H1 (cell line): ENCODE measurements at regions of chr12 and their contacts with region 1.

Region 1: GRCh38 chr12:57803319-57803893 is 15.1 kb downstream of the AVIL start:
- DNase-seq: peak; percentile 31 to 76
- H3K4me3 ChIP-seq: no peak overlapping the region
- H3K27ac ChIP-seq: no peak overlapping the region
- H3K4me1 ChIP-seq: peaks cover 0 to 2% (median under 1%) of the 10 kb centered on the region in 4 experiments; a peak in 1 of 7 replicates
- H3K27me3 ChIP-seq: no peaks in the 10 kb centered on the region
- CTCF ChIP-seq: peak; percentile 73 to 92 (median 78)
- EP300 ChIP-seq: no peak
- POLR2A ChIP-seq: no peak
- RAD21 ChIP-seq: peak; percentile 64 to 72

Region 2: DNA sequence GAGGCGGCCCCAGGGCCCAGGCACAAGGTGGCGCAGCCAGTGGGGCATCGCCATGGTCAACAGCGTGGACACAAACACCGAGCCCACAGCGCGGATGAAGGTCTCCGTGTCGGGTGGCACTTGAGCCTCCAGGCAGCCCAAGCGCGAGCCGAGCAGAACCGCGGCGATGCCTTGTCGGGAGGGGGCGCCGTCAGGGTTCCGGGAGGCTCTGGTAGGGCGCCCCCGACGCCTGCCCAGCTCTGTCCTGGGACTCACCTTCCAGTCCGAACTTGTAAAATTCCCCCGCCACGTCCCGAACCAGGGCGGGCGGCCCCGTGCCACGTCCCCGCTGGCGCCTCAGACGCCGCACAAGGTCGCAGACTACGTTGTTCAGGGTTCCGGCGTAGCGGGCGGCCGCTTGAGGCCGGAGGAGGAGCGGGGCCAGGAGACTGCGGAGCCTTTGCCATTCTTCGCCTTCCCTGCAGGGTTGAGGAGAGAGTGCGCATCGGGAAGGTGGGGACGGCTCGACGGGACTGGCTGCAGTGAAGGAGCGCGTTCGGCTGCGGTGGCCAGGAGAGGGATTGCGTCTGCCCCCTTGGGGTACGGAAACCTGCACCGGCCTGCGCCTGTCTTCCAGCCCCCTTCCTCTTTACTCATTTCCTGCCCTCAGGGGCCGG is 38.2 kb before region 1 on chr12:
- CTCF ChIA-PET with region 1: interaction called, 14 read pairs
- POLR2A ChIA-PET with region 1: interaction called, 10 read pairs
- DNase-seq: peak in 1 of 2 experiments; percentile 80
- H3K4me3 ChIP-seq: peak overlapping the region; percentile 39 to 66 (median 64)
- H3K27ac ChIP-seq: no peak overlapping the region
- H3K4me1 ChIP-seq: peaks cover 13 to 22% (median 19%) of the 10 kb centered on the region in 4 experiments
- H3K27me3 ChIP-seq: peaks cover 22 to 39% (median 37%) of the 10 kb centered on the region in 4 experiments
- CTCF ChIP-seq: peak in 2 of 3 experiments; percentile 41 to 61; a peak in 3 of 4 replicates
- EP300 ChIP-seq: no peak
- POLR2A ChIP-seq: no peak; a peak in 1 of 3 replicates
- RAD21 ChIP-seq: peak; percentile 1 to 18; a peak in 2 of 4 replicates

Region 3: DNA sequence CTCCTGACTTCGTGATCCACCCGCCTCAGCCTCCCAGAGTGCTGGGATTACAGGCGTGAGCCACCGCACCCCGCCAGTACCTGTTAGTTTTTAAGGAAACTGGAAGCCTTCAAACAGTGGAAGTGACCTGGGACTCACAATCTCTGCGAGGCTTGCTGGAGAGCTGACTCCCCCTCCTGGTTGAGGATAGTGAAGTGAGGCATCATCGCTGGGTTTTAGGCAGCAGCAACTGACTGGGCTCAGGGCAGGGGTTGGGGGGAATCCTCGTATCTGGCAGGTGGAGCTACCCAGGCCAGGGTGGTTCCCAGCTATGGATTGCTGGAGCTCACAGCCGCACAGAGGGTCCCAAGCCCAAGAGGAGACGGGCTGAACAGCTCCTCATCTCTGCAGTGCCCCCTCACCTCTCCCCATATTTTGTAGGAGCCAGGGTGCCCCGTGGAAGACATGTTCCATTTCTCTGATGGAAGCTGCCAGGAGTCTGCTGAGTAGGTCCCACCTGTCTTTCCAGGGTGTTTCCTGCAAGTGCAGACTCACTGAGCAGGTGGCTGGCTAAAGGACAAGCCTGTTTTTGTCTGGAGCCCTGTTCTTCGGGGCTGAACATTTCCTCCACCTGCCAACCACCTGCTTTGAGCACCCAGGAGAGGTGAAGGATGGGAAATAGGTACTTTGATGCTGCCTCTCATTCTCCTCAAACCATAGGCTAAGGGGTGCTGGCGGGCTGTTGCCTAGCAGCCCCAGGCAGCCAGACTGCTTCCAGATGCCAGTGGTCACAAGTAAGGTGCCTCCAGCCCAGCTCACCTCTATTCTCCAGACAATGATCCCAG is 12.0 kb after region 1 on chr12:
- CTCF ChIA-PET with region 1: interaction called, 146 read pairs
- POLR2A ChIA-PET with region 1: interaction called, 71 read pairs
- DNase-seq: peak; percentile 50 to 62
- H3K4me3 ChIP-seq: no peak overlapping the region
- H3K27ac ChIP-seq: no peak overlapping the region
- H3K4me1 ChIP-seq: no peaks in the 10 kb centered on the region
- H3K27me3 ChIP-seq: no peaks in the 10 kb centered on the region
- CTCF ChIP-seq: peak; percentile 63 to 70 (median 67)
- EP300 ChIP-seq: no peak
- POLR2A ChIP-seq: no peak
- RAD21 ChIP-seq: peak; percentile 57 to 70

Region 4: DNA sequence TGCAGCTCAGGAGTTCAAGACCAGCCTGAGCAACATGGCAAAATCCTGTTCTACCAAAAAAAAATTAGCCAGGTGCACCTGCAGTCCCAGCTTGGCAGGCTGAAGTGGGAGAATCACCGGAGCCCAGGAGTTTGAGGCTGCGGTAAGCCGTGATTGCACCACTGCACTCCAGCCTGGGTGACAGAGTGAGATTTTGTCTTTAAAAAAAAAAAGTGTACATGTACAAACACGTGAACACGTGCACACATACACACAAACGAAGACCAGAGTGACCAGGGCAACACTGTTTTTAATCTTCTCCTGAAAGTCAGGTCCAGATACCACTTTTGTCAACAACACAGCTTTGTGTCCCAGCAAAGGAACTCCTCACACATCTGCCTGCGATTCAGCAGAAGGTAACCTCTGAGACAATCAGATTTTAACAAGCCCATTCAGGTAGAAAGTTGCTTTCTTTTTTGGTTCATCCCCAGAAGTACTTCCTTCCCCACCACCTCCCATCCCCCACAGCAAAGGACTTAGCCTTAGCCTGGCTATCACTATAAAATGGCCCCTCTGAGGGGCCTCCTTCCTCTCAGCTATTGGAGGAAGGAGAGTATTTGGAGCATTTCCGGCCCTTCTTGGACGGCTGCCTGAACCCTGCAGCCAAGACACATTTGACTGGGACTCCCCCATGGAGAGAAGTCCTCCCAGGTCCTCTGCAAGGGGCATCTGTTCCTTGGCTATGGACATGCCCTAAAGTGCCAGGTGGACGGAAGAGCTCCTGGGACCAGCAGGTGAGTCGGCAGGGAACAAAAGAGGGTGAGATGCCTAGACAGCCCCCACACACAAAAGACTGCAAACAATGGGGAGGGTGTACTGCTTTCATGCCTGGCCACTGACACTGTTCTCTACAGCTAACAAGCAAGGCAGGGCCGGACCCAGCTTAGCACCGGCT is 33.3 kb after region 1 on chr12:
- CTCF ChIA-PET with region 1: interaction called, 11 read pairs
- POLR2A ChIA-PET with region 1: no interaction called
- DNase-seq: no peak
- H3K4me3 ChIP-seq: peak overlapping the region in 3 of 4 experiments; percentile 0 to 31 (median 14); a peak in 3 of 8 replicates
- H3K27ac ChIP-seq: peak overlapping the region; percentile 55; the same call in 1 of the 2 replicates
- H3K4me1 ChIP-seq: peaks cover 37 to 69% (median 45%) of the 10 kb centered on the region in 4 experiments
- H3K27me3 ChIP-seq: no peaks in the 10 kb centered on the region
- CTCF ChIP-seq: no peak
- EP300 ChIP-seq: peak in 1 of 2 experiments; percentile 30; a peak in 1 of 3 replicates
- POLR2A ChIP-seq: no peak; a peak in 1 of 3 replicates
- RAD21 ChIP-seq: no peak